PC-3 (cell line): ENCODE measurements at regions of chr11 and their contacts with region 1.

Region 1: GRCh38 chr11:121655537-121656327 is 203.0 kb upstream of the SORL1-AS1 start:
- DNase-seq: peak; percentile 89
- ATAC-seq: peak; percentile 72
- H3K4me3 ChIP-seq: peak overlapping the region; percentile 70
- H3K27ac ChIP-seq: peak overlapping the region; percentile 76
- H3K4me1 ChIP-seq: peaks cover 29% of the 10 kb centered on the region
- H3K27me3 ChIP-seq: no peaks in the 10 kb centered on the region
- CTCF ChIP-seq: peak; percentile 78

Region 2: DNA sequence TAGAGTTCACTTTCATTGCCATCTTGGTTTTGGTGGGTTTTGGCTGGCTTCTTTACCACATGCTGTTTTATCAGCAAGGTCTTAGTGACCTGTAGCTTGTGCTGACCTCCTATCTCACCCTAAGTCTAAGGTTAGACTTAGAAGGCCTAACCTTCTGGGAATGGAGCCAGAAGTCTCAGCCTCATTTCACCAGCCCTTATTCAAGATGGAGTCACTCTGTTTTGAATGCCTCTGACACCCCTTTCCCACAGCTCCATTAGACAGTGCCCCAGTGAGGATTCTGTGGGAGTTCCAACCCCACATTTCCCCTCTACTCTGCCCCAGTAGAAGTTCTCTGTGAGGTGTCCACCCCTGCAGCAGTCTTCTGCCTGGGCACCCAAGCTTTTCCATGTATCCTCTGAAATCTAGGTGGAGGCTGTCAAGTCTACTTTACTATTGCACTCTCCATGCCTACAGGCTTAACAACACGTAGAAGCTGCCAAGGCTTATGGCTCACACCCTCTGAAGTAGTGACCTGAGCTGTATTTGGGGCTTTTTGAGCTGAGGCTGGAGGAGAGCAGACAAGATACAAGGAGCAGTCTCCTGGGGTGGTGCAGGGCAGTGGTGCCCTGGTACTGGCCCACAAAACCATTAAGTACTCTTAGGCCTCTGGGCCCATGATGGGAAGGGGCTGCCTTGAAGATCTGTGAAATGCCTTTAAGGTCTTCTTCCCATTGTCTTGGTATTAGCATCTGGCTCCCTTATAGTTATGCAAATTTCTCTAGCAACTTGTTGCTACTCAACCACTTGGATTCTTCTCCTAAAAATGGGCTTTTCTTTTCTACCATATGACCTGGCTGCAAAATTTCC is 429.1 kb before region 1 on chr11:
- CTCF ChIA-PET with region 1: no interaction called
- POLR2A ChIA-PET with region 1: no interaction called
- intact Hi-C with region 1: no loop called
- DNase-seq: no peak
- ATAC-seq: no peak
- H3K4me3 ChIP-seq: no peak overlapping the region
- H3K27ac ChIP-seq: no peak overlapping the region
- H3K4me1 ChIP-seq: no peaks in the 10 kb centered on the region
- H3K27me3 ChIP-seq: peaks cover 27% of the 10 kb centered on the region; the same call in 1 of the 2 replicates
- CTCF ChIP-seq: no peak

Region 3: GRCh38 chr11:121591405-121592033 is 64.2 kb before region 1 on chr11:
- CTCF ChIA-PET with region 1: interaction called, 6 read pairs
- POLR2A ChIA-PET with region 1: no interaction called
- intact Hi-C with region 1: loop called (anchors 1 kb)
- DNase-seq: peak; percentile 95
- ATAC-seq: peak; percentile 35
- H3K4me3 ChIP-seq: no peak overlapping the region
- H3K27ac ChIP-seq: no peak overlapping the region
- H3K4me1 ChIP-seq: peaks cover 35% of the 10 kb centered on the region
- H3K27me3 ChIP-seq: no peaks in the 10 kb centered on the region
- CTCF ChIP-seq: peak; percentile 94

Region 4: DNA sequence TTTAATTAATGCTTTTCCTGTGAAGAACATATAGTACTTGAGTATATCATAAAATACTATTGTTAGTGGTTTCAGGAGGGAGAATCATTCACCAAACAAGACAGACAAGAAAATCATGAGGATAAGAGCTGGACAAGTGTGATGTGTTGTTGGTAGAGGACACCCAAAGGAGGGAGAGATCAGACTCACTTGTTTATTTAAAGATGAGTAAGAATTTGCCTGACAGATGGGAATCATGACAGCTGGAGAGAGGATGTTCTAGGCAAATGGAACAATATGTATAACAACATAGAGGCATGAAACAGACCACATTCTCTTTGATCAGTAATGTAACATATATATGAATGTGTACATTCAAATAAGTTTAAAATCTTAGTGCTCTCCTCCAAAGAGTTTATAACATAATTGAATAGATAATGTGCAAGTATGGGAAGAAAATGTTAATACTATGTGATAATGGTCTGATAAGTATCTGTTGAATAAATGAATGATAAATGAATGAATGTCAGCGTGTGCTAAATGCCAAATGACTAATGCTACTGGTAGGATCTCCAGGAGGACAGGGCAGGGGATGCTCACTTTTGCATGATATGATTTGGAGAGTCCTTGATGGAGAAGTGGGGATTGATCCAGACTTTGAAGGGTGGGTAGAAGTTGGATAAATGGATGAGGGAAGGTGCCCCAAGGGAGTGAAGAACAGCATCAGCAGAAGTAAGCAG is 26.0 kb after region 1 on chr11:
- CTCF ChIA-PET with region 1: no interaction called
- POLR2A ChIA-PET with region 1: no interaction called
- intact Hi-C with region 1: no loop called
- DNase-seq: peak; percentile 57
- ATAC-seq: peak; percentile 94
- H3K4me3 ChIP-seq: no peak overlapping the region
- H3K27ac ChIP-seq: no peak overlapping the region
- H3K4me1 ChIP-seq: peaks cover 12% of the 10 kb centered on the region
- H3K27me3 ChIP-seq: no peaks in the 10 kb centered on the region
- CTCF ChIP-seq: no peak

Region 5: GRCh38 chr11:121696177-121696871 is 40.6 kb after region 1 on chr11:
- CTCF ChIA-PET with region 1: no interaction called
- POLR2A ChIA-PET with region 1: no interaction called
- intact Hi-C with region 1: no loop called
- DNase-seq: no peak
- ATAC-seq: no peak
- H3K4me3 ChIP-seq: no peak overlapping the region
- H3K27ac ChIP-seq: no peak overlapping the region
- H3K4me1 ChIP-seq: no peaks in the 10 kb centered on the region
- H3K27me3 ChIP-seq: peaks cover 21% of the 10 kb centered on the region; the same call in 1 of the 2 replicates
- CTCF ChIP-seq: no peak

Region 6: DNA sequence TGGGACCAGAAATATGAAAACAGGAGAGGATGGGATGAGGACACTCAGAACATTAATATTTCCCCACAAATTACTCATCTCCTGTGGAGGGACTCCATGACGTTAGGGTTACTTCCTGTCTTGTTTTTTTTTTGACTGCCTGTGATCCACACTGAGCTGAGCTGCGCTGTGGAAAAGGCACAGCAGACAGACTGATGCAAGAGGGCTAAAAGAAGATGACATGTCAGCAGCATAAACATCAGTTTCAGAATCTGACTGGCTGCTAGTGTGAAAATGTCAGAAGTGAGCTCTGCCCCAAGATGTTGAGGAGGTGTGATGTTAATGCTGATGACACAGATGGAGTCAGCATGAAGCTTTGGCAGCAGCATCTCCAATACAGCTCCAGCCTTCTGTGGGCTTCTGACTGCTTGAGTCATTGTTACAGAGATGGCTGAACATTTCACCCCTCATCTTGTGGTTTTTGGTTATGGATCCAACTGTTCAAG is 173.5 kb after region 1 on chr11:
- CTCF ChIA-PET with region 1: no interaction called
- POLR2A ChIA-PET with region 1: interaction called, 7 read pairs
- intact Hi-C with region 1: loop called (anchors 5 kb)
- DNase-seq: peak; percentile 85
- ATAC-seq: peak; percentile 92
- H3K4me3 ChIP-seq: no peak overlapping the region
- H3K27ac ChIP-seq: peak overlapping the region; percentile 85
- H3K4me1 ChIP-seq: peaks cover 20% of the 10 kb centered on the region
- H3K27me3 ChIP-seq: no peaks in the 10 kb centered on the region
- CTCF ChIP-seq: no peak

Region 7: DNA sequence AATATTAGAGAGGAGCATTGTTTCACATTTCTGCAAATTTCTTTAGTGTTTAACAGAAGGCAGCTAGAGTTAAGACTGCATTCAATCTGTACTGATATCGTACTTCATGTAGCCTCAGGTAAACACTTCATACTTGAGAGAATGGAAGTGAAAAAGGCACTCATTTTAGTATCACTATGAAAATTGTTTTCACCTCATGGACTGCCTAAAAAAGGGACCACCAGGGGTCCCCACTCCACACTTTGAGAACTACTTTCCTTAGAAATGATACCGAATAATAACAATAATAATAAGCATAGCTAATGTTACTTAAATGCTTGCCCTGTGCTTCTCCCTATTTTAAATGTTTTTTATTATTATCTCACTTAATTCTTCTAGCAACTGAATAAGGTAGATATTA is 365.2 kb after region 1 on chr11:
- CTCF ChIA-PET with region 1: no interaction called
- POLR2A ChIA-PET with region 1: no interaction called
- intact Hi-C with region 1: loop called (anchors 5 kb)
- DNase-seq: peak; percentile 46
- ATAC-seq: peak; percentile 18; the same call in 1 of the 2 replicates
- H3K4me3 ChIP-seq: no peak overlapping the region
- H3K27ac ChIP-seq: no peak overlapping the region
- H3K4me1 ChIP-seq: 0 out of 2 replicates have a peak, but pooled peaks cover 7% of the 10 kb centered on the region
- H3K27me3 ChIP-seq: no peaks in the 10 kb centered on the region
- CTCF ChIP-seq: peak; percentile 70

Region 8: GRCh38 chr11:122159173-122159721 is 503.5 kb after region 1 on chr11:
- CTCF ChIA-PET with region 1: no interaction called
- POLR2A ChIA-PET with region 1: no interaction called
- intact Hi-C with region 1: loop called (anchors 5 kb)
- DNase-seq: peak; percentile 75
- ATAC-seq: peak; percentile 14
- H3K4me3 ChIP-seq: peak overlapping the region; percentile 75
- H3K27ac ChIP-seq: peak overlapping the region; percentile 99
- H3K4me1 ChIP-seq: peaks cover 70% of the 10 kb centered on the region
- H3K27me3 ChIP-seq: no peaks in the 10 kb centered on the region
- CTCF ChIP-seq: no peak